Heart right ventricle (tissue), 16 donors: ENCODE measurements at regions of chr11 and their contacts with region 1.

Region 1: DNA sequence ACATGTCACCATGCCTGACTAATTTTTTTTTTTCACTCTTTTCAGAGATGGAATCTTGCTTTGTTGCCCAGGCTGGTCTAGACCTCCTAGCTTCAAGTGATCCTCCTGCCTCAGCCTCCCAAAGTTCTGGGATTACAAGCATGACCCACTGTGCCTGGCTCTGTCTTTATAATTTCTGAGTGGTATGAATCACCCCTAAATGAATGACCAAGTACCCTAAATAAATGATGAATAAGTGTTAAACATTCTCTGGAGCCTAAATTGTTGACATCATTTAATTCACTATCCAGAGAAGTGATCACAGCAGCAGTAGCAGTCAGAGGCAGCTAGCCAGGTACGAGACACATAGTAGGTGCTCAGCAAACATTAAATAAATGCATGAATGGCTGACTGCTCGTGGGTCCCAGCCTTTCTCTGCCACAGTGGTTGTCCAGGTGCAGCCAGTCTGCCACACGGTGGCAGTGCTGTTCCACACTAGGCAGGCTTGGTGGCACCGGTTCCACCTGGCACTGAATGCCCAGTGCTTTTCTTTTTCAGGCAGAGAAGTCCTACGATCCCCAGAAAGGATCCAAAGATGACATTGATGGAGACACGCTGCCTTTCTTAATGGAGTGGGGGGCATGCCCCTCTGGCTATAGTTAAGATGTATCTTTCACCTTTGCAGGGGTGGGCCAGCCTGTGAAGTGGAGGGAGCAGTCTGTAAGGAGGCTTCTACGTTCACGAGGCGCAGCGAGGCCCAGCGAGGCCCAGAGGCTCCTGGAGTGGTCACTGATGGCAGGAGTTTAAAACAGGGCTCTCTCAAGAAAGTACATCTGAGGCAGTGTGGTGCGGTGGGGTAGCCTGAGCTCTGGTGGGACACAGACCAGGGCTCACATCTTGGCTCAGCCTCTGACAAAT is 8.7 kb upstream of the TTC12 start:
- DNase-seq: peak; percentile 59 to 73
- ATAC-seq: peak; percentile 69 to 95 (median 90)
- H3K4me3 ChIP-seq: no peak overlapping the region
- H3K27ac ChIP-seq: no peak overlapping the region
- H3K4me1 ChIP-seq: peaks cover 0 to 5% (median 0%) of the 10 kb centered on the region in 9 donors
- H3K27me3 ChIP-seq: peaks cover 0 to 9% (median 0%) of the 10 kb centered on the region in 7 donors
- CTCF ChIP-seq: peak; percentile 80 to 95 (median 91)

Region 2: GRCh38 chr11:113263458-113264259 is 42.0 kb before region 1 on chr11:
- intact Hi-C with region 1: loop called in 1 of 10 experiments (anchors 1 kb)
- DNase-seq: no peak
- ATAC-seq: peak in 1 of 8 donors; percentile 4
- H3K4me3 ChIP-seq: no peak overlapping the region
- H3K27ac ChIP-seq: no peak overlapping the region
- H3K4me1 ChIP-seq: peaks cover 0 to 25% (median 9%) of the 10 kb centered on the region in 9 donors
- H3K27me3 ChIP-seq: no peaks in the 10 kb centered on the region
- CTCF ChIP-seq: no peak

Region 3: GRCh38 chr11:113278925-113279324 is 26.8 kb before region 1 on chr11:
- intact Hi-C with region 1: no loop called
- DNase-seq: no peak
- ATAC-seq: peak in 7 of 8 donors; percentile 34 to 82 (median 67)
- H3K4me3 ChIP-seq: no peak overlapping the region
- H3K27ac ChIP-seq: no peak overlapping the region
- H3K4me1 ChIP-seq: peaks cover 0 to 3% (median 0%) of the 10 kb centered on the region in 9 donors
- H3K27me3 ChIP-seq: no peaks in the 10 kb centered on the region
- CTCF ChIP-seq: peak in 7 of 9 donors; percentile 12 to 46 (median 34)

Region 4: GRCh38 chr11:113363406-113363805 is 57.7 kb after region 1 on chr11:
- intact Hi-C with region 1: loop called in 1 of 10 experiments (anchors 10 kb)
- DNase-seq: no peak
- ATAC-seq: no peak
- H3K4me3 ChIP-seq: no peak overlapping the region
- H3K27ac ChIP-seq: no peak overlapping the region
- H3K4me1 ChIP-seq: no peaks in the 10 kb centered on the region
- H3K27me3 ChIP-seq: no peaks in the 10 kb centered on the region
- CTCF ChIP-seq: no peak

Region 5: DNA sequence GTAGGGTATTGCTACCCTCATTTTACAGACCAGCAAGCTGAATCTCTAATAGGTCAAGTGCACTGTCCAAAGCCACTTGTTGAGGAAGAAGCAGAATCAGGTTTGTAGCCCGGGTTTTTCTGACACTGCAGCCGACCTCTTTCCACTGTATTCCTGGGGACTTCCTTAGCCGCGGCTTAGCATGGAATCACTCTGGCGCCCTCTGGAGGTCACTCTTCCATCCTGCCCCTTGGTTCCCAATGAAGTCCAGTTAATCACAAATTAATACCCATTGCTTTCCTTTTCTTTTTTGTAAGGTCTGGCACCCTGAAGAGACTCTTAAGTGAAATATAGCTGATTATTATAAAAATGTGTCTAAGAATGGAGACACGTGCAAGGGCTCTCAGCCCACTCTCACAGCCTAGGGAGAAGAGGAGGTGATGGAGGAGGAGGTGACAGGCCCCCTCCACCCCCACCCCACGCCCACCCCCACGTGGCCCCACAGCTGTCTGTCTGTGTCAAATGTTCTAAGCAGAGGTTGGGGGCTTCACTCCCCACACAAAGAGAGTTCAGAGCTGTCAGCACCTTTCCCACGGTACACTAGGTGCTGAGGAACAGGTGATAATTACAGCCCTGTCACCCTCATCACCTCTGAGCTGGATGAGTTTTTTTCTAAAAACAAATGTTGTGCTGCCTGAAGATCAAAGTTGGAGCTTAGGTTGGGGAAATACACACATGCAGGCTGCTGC is 227.2 kb after region 1 on chr11:
- intact Hi-C with region 1: loop called (anchors 1 to 5 kb)
- DNase-seq: peak; percentile 68 to 75
- ATAC-seq: peak in 7 of 8 donors; percentile 58 to 79 (median 76)
- H3K4me3 ChIP-seq: no peak overlapping the region
- H3K27ac ChIP-seq: no peak overlapping the region
- H3K4me1 ChIP-seq: no peaks in the 10 kb centered on the region
- H3K27me3 ChIP-seq: peaks cover 0 to 24% (median 4%) of the 10 kb centered on the region in 7 donors
- CTCF ChIP-seq: peak; percentile 82 to 92 (median 86)

Region 6: GRCh38 chr11:113644605-113645004 is 338.9 kb after region 1 on chr11:
- intact Hi-C with region 1: no loop called
- DNase-seq: no peak
- ATAC-seq: peak in 5 of 8 donors; percentile 42 to 73 (median 67)
- H3K4me3 ChIP-seq: no peak overlapping the region
- H3K27ac ChIP-seq: no peak overlapping the region
- H3K4me1 ChIP-seq: peaks cover 0 to 7% (median 0%) of the 10 kb centered on the region in 9 donors
- H3K27me3 ChIP-seq: no peaks in the 10 kb centered on the region
- CTCF ChIP-seq: no peak

Region 7: DNA sequence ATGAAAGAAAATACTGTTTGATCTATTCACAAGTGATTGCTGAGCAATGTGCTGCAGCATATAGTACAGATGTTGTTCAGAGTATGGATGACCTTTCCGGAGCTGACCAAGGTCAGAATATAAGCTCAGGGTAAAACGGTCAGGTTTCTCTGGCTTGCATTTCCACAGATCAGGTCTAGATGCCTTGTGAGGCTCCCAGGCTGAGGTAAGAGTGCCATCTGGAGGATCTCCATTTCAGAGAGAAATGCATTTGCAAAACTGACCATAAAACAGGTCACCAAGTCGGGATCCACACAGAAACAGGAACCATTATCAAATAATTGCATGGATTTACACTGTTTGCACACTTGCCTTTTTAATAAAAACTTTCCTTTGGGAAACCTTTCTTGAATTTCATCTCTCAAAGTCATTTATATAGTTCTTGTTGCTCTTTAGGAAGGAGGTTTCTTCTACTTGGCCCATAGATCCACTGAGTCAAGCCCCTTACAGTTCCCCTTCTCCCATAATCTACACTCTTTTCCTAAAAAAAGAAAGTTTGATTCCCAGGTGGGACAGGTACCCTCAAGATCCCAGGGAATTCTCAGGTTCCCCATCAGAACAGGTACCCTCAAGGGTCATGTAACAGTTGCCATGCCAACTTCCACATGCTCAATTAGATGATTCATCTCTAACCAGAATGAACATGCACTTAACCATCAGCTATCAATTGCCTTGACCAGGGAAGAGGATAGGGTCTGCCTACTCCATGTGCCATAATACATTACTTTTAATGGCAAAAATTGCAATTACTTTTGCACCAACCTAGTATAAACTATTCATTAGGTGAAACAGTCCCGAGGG is 425.4 kb after region 1 on chr11:
- intact Hi-C with region 1: loop called (anchors 1 to 5 kb)
- DNase-seq: peak in 1 of 2 donors; percentile 16
- ATAC-seq: peak in 5 of 8 donors; percentile 17 to 74 (median 63)
- H3K4me3 ChIP-seq: no peak overlapping the region
- H3K27ac ChIP-seq: no peak overlapping the region
- H3K4me1 ChIP-seq: peaks cover 0 to 5% (median 0%) of the 10 kb centered on the region in 9 donors
- H3K27me3 ChIP-seq: no peaks in the 10 kb centered on the region
- CTCF ChIP-seq: peak; percentile 42 to 77 (median 64)

Region 8: DNA sequence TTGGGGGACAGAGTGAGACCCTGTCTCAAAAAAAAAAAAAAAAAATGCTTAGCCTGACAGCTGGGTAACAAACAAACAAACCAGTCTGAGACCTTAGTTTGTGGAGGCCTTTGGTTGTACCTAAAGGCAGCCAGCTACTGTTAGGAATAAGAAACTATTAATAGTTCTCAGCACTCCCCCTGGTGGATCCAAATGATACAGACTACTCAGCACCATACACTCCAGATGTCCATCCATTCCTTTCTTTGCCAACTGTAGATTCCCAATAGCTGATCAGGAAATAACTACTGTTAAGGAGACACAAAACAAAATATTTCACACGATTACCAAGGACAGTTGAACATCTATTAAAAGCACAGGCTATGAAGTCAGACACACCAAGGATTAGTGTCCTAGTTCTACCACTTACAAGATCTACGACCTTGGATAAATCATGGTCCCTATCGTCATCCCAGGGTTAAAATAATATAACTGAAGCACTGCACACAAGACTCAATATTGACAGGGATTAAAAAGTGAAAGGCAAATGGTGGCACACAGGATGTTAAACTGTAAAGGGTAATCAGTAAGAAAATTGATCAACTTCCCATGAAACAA is 491.1 kb after region 1 on chr11:
- intact Hi-C with region 1: loop called in 5 of 10 experiments (anchors 5 to 10 kb)
- DNase-seq: peak in 1 of 2 donors; percentile 35
- ATAC-seq: peak; percentile 80 to 93 (median 88)
- H3K4me3 ChIP-seq: no peak overlapping the region
- H3K27ac ChIP-seq: no peak overlapping the region
- H3K4me1 ChIP-seq: peaks cover 0 to 3% (median 0%) of the 10 kb centered on the region in 9 donors
- H3K27me3 ChIP-seq: no peaks in the 10 kb centered on the region
- CTCF ChIP-seq: peak; percentile 39 to 71 (median 62)